CD8-positive, alpha-beta T cell (primary cell): ENCODE measurements at regions of chr18 and their contacts with region 1.

Region 1: GRCh38 chr18:13726232-13726971 is at the starts of genes FAM210A and RNMT:
- DNase-seq: peak; percentile 82 to 98 (median 94)
- ATAC-seq: peak; percentile 91
- H3K4me3 ChIP-seq: peak within 1 kb of the TSS; percentile 74 to 87
- H3K4me3 Mint-ChIP-seq: peak within 1 kb of the TSS; percentile 80
- H3K27ac ChIP-seq: peak within 1 kb of the TSS; percentile 90 to 93
- H3K27ac Mint-ChIP-seq: peak within 1 kb of the TSS; percentile 99
- H3K4me1 ChIP-seq: peaks cover 41% of the 10 kb centered on the region
- H3K4me1 Mint-ChIP-seq: peaks cover 64% of the 10 kb centered on the region
- H3K27me3 ChIP-seq: no peaks in the 10 kb centered on the region
- H3K27me3 Mint-ChIP-seq: no peaks in the 10 kb centered on the region
- CTCF ChIP-seq: no peak
- total RNA-seq, gene FAM210A: 8.3 to 9.1 TPM
- total RNA-seq, gene RNMT: 159 to 160 TPM

Region 2: GRCh38 chr18:11980555-11981382 is 1745.6 kb before region 1 on chr18:
- CTCF ChIA-PET with region 1: no interaction called
- POLR2A ChIA-PET with region 1: no interaction called
- intact Hi-C with region 1: loop called (anchors 5 kb)
- DNase-seq: peak; percentile 88 to 97 (median 92)
- ATAC-seq: peak; percentile 90
- H3K4me3 ChIP-seq: peak overlapping the region; percentile 56 to 68
- H3K4me3 Mint-ChIP-seq: peak overlapping the region; percentile 85
- H3K27ac ChIP-seq: no peak overlapping the region
- H3K27ac Mint-ChIP-seq: peak overlapping the region; percentile 52
- H3K4me1 ChIP-seq: no peaks in the 10 kb centered on the region
- H3K4me1 Mint-ChIP-seq: peaks cover 11% of the 10 kb centered on the region
- H3K27me3 ChIP-seq: peaks cover 0 to 2% of the 10 kb centered on the region in 2 experiments
- H3K27me3 Mint-ChIP-seq: no peaks in the 10 kb centered on the region
- CTCF ChIP-seq: no peak

Region 3: DNA sequence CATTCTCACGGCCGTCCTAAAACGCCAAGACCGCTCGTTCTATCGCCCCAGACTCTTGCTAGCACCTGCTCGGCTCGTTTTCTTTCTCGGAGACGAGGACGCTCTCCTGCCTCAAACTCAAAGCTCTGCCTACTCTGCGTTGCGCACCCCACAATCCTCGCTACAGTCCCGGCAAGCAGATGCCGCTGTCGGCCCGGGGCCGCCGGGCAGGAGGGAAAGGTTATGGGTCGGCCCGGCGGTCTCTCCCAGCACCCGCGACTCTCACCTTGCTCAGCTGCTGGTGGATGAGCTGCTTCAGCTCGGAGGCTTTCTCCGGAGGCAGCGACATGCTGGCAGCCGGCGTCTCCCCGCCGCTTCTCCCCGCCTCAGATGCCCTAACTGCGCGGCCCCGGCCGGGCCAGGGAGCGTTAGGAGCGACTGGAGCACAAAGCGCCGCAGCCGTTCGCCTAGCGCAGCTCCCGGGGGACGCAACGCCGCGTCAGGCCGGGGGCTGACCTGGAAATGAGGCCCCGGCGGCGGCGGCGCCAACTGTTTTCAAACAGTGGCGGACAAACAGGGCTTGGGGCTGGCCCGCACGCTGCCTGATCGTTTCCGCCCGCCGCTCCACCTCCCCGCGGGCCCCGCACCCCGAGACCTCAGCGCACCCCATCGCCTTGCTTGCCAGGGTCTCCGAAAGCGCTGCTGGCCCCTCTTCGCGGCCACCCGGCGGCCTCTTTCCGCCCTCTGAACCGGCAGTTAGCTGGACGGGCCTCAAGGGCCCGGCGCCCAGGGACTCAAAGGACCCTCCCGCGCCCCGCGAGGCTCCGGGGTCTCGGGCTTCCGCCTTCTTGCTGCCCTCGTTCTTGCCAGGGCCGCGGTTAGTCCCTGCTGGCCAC is 1023.9 kb before region 1 on chr18 and contains the starts of genes CEP76 and PSMG2:
- CTCF ChIA-PET with region 1: no interaction called
- POLR2A ChIA-PET with region 1: interaction called, 3 read pairs
- intact Hi-C with region 1: loop called (anchors 2 kb)
- DNase-seq: peak; percentile 68 to 91 (median 83)
- ATAC-seq: peak; percentile 78
- H3K4me3 ChIP-seq: peak within 1 kb of the TSS; percentile 70 to 96
- H3K4me3 Mint-ChIP-seq: peak within 1 kb of the TSS; percentile 96
- H3K27ac ChIP-seq: peak within 1 kb of the TSS; percentile 95 to 98
- H3K27ac Mint-ChIP-seq: peak within 1 kb of the TSS; percentile 100
- H3K4me1 ChIP-seq: peaks cover 30% of the 10 kb centered on the region
- H3K4me1 Mint-ChIP-seq: peaks cover 52% of the 10 kb centered on the region
- H3K27me3 ChIP-seq: no peaks in the 10 kb centered on the region
- H3K27me3 Mint-ChIP-seq: no peaks in the 10 kb centered on the region
- CTCF ChIP-seq: no peak
- total RNA-seq, gene CEP76: 10.9 to 11.0 TPM
- total RNA-seq, gene PSMG2: 80.3 to 81.7 TPM

Region 4: DNA sequence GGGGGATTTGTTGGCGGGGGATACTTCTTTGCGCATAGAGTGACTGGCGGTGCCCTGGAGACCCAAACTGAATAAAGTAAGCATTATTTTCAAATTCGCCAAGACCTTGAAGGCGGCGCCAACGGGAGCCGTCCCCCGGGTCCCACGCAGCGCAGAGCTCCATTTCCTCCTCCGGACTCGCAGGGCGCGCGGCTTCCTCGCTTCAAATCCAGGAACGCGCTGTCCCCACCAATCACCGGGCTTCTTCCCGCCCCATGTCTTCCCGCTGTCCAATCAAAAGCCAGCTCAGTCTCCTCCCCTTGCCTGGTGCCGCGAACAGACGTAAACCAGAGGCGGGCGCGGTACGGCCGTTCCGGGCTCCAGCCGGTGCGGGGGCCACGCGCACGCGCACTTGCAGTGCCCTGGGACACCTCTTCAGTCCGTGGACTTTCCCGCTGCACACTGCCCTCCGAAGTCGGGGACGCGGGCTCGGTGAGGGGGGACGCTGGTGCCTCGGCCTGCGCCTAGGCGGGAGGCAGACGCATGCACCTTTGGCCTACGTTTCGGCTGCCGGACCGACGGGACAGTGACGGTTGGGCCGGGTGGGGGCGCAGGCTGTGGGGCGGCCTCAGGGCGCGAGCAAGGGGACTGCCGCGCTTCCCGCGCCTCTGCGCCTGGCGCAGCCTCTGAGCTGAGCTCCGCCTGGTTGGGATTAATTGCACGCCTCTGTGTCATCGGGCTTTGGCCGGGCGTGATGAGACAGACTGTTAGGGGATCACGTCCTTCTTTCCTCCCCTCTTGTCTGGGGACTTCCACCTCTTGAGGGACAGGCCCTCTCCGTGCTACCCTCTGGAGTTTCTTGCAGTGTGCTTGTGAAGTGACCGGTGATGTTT is 735.2 kb before region 1 on chr18 and contains the start of gene CEP192:
- CTCF ChIA-PET with region 1: no interaction called
- POLR2A ChIA-PET with region 1: no interaction called
- intact Hi-C with region 1: loop called (anchors 1 kb)
- DNase-seq: peak; percentile 94 to 99 (median 97)
- ATAC-seq: peak; percentile 96
- H3K4me3 ChIP-seq: peak within 1 kb of the TSS; percentile 79 to 90
- H3K4me3 Mint-ChIP-seq: peak within 1 kb of the TSS; percentile 98
- H3K27ac ChIP-seq: peak within 1 kb of the TSS; percentile 57 to 75
- H3K27ac Mint-ChIP-seq: peak within 1 kb of the TSS; percentile 97
- H3K4me1 ChIP-seq: peaks cover 27% of the 10 kb centered on the region
- H3K4me1 Mint-ChIP-seq: peaks cover 17% of the 10 kb centered on the region
- H3K27me3 ChIP-seq: no peaks in the 10 kb centered on the region
- H3K27me3 Mint-ChIP-seq: no peaks in the 10 kb centered on the region
- CTCF ChIP-seq: no peak
- total RNA-seq, gene CEP192: 22.8 to 24.3 TPM

Region 5: GRCh38 chr18:13381944-13382365 is 344.4 kb before region 1 on chr18:
- CTCF ChIA-PET with region 1: interaction called, 3 read pairs
- POLR2A ChIA-PET with region 1: no interaction called
- intact Hi-C with region 1: loop called (anchors 2 to 5 kb)
- DNase-seq: peak in 6 of 9 experiments; percentile 41 to 74 (median 51)
- ATAC-seq: peak; percentile 46
- H3K4me3 ChIP-seq: peak overlapping the region; percentile 32 to 57
- H3K4me3 Mint-ChIP-seq: peak overlapping the region; percentile 83
- H3K27ac ChIP-seq: peak overlapping the region; percentile 76 to 94
- H3K27ac Mint-ChIP-seq: peak overlapping the region; percentile 95
- H3K4me1 ChIP-seq: peaks cover 57% of the 10 kb centered on the region
- H3K4me1 Mint-ChIP-seq: peaks cover 65% of the 10 kb centered on the region
- H3K27me3 ChIP-seq: no peaks in the 10 kb centered on the region
- H3K27me3 Mint-ChIP-seq: no peaks in the 10 kb centered on the region
- CTCF ChIP-seq: no peak

Region 6: GRCh38 chr18:13566941-13567746 is 159.3 kb before region 1 on chr18:
- CTCF ChIA-PET with region 1: no interaction called
- POLR2A ChIA-PET with region 1: no interaction called
- intact Hi-C with region 1: loop called in 1 of 2 experiments (anchors 5 kb)
- DNase-seq: peak in 4 of 9 experiments; percentile 27 to 68 (median 36)
- ATAC-seq: peak; percentile 63
- H3K4me3 ChIP-seq: peak overlapping the region in 1 of 2 experiments; percentile 18
- H3K4me3 Mint-ChIP-seq: peak overlapping the region; percentile 74
- H3K27ac ChIP-seq: peak overlapping the region; percentile 22 to 39
- H3K27ac Mint-ChIP-seq: peak overlapping the region; percentile 90
- H3K4me1 ChIP-seq: peaks cover 36% of the 10 kb centered on the region
- H3K4me1 Mint-ChIP-seq: peaks cover 64% of the 10 kb centered on the region
- H3K27me3 ChIP-seq: no peaks in the 10 kb centered on the region
- H3K27me3 Mint-ChIP-seq: no peaks in the 10 kb centered on the region
- CTCF ChIP-seq: no peak